Gastrocnemius medialis (tissue), 4 donors: ENCODE measurements at regions of chr9 and their contacts with region 1.

Region 1: GRCh38 chr9:98255578-98256296 is at the start of gene TBC1D2:
- DNase-seq: peak; percentile 91 to 93
- ATAC-seq: peak; percentile 95
- H3K4me3 ChIP-seq: peak within 1 kb of the TSS; percentile 76 to 100 (median 78)
- H3K27ac ChIP-seq: peak within 1 kb of the TSS; percentile 90 to 100 (median 93)
- H3K4me1 ChIP-seq: peaks cover 11 to 20% of the 10 kb centered on the region in 2 donors
- H3K27me3 ChIP-seq: no peaks in the 10 kb centered on the region
- CTCF ChIP-seq: peak in 2 of 5 experiments; percentile 25 to 30
- POLR2A ChIP-seq: peak; percentile 41 to 45
- total RNA-seq, gene TBC1D2: 0.66 to 2.9 (median 1.6) TPM

Region 2: DNA sequence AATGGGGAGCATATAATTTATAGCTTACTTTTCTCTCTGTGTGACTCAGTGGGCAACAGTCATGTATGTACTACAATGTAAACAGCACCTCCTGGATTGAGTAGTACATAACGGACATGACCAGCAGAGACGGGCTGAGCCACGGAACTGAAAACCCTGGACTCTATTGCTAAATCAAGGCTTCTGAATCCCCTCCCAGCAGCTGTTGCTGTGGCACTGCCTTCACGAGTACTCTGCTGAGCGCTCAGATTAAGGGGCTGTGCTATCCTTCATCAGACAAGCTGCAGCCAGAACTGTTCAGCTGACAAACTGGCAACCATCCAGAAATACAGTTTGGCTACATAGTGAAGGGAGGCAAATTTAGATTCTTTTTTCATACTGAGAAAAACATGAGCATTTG is 1079.5 kb before region 1 on chr9:
- in situ Hi-C with region 1: no loop called
- intact Hi-C with region 1: no loop called
- DNase-seq: no peak
- ATAC-seq: no peak
- H3K4me3 ChIP-seq: no peak overlapping the region
- H3K27ac ChIP-seq: no peak overlapping the region
- H3K4me1 ChIP-seq: no peaks in the 10 kb centered on the region
- H3K27me3 ChIP-seq: no peaks in the 10 kb centered on the region
- CTCF ChIP-seq: no peak
- POLR2A ChIP-seq: no peak

Region 3: GRCh38 chr9:97632985-97633858 is 622.5 kb before region 1 on chr9 and contains the starts of genes NCBP1 and TSTD2:
- in situ Hi-C with region 1: no loop called
- intact Hi-C with region 1: loop called (anchors 5 kb)
- DNase-seq: peak; percentile 96 to 98
- ATAC-seq: peak; percentile 87 to 88
- H3K4me3 ChIP-seq: peak within 1 kb of the TSS; percentile 86 to 92 (median 88)
- H3K27ac ChIP-seq: peak within 1 kb of the TSS; percentile 91 to 99 (median 98)
- H3K4me1 ChIP-seq: peaks cover 53 to 56% of the 10 kb centered on the region in 2 donors
- H3K27me3 ChIP-seq: no peaks in the 10 kb centered on the region
- CTCF ChIP-seq: peak in 1 of 5 experiments; percentile 8
- POLR2A ChIP-seq: peak; percentile 83 to 87
- total RNA-seq, gene NCBP1: 8.2 to 17.2 (median 15.7) TPM
- total RNA-seq, gene TSTD2: 11.6 to 19.9 (median 14.5) TPM

Region 4: GRCh38 chr9:97703437-97704344 is 552.0 kb before region 1 on chr9:
- in situ Hi-C with region 1: loop called (anchors 10 to 25 kb)
- intact Hi-C with region 1: loop called (anchors 5 kb)
- DNase-seq: no peak
- ATAC-seq: no peak
- H3K4me3 ChIP-seq: no peak overlapping the region
- H3K27ac ChIP-seq: no peak overlapping the region
- H3K4me1 ChIP-seq: no peaks in the 10 kb centered on the region
- H3K27me3 ChIP-seq: no peaks in the 10 kb centered on the region
- CTCF ChIP-seq: no peak
- POLR2A ChIP-seq: no peak

Region 5: DNA sequence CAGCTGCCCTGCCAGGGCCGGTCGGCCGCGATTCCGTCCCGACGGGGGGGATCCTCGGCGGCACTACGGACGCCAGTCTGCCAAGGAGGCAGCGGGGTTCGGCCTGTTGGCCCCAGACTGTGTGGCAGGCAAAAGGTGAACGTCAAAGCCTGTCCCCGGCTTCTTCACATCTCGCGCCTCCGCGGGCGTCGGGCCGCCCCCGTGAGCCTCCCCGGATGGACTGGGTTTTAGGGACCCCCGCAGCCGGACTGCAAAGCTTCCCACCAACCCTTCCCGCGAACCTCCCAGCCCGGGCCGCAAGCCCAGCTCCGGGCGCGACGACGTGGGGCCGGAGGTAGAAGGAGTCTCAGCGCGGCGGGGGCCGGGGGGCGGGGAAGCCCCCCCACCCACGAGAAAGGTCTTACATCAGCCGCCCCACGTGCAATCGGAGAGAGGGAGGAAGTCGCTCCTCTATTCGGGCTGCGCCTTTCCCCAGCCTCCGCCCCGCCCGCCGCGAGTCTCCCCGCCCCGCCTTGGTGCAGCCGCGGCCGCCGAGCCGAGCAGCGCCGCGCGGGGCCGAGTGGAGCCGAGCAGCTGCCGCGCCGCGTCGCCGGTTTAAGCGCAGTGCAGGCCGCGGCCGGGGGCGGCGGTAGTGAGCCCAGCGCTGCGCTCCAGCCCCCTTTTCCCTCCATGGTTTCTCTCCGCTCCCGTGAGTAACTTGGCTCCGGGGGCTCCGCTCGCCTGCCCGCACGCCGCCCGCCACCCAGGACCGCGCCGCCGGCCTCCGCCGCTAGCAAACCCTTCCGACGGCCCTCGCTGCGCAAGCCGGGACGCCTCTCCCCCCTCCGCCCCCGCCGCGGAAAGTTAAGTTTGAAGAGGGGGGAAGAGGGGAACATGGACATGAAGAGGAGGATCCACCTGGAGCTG is 272.8 kb before region 1 on chr9 and contains the start of gene ANP32B:
- in situ Hi-C with region 1: no loop called
- intact Hi-C with region 1: loop called (anchors 5 kb)
- DNase-seq: peak; percentile 73 to 85
- ATAC-seq: peak; percentile 55 to 59
- H3K4me3 ChIP-seq: peak within 1 kb of the TSS; percentile 84 to 99 (median 89)
- H3K27ac ChIP-seq: peak within 1 kb of the TSS; percentile 93 to 99 (median 96)
- H3K4me1 ChIP-seq: peaks cover 48 to 55% of the 10 kb centered on the region in 2 donors
- H3K27me3 ChIP-seq: no peaks in the 10 kb centered on the region
- CTCF ChIP-seq: peak; percentile 73 to 99 (median 97)
- POLR2A ChIP-seq: peak; percentile 58 to 63
- total RNA-seq, gene ANP32B: 8.2 to 24.5 (median 17.8) TPM

Region 6: DNA sequence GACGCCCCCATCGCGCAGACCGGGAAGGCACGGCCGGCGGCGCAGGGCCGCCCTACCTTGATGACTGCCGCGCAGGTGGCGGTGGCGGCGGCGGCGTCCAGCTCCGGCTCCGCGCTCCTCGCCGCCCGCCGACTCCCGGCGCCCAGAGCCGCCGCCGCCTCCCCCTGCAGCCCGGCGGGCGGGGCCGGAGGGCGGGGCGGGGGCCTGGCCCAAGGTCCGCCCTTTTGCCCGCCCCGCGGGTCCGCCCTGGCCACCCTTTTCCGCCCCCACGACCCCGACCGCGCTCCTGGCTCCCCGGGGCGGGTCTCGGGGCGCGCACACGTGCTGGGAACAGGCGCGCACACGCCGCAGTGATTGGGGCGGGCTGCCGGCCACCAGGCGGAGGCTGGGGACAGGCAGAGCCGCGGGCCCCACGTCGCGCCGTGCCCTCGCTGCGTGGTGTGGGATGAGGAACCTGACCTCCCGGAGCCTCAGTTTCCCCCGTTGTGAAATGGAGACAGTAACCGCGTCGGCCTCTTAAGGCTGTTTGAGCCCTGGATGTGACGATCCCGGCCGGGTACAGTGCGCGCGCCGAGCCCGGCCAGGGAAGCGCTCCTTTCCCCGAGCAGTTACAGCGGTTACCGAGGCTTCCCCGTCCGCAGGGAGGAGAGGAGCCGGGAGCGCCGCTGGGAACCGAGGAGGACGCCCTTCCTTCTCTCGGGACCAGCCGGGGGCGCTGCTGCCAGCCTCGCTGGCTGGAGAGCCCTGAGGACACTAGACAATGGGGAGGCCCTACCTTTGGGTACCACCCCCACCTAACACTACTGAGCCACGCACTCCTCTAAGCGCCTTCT is 63.0 kb before region 1 on chr9 and contains the start of gene CORO2A:
- in situ Hi-C with region 1: no loop called
- intact Hi-C with region 1: loop called (anchors 5 kb)
- DNase-seq: no peak
- ATAC-seq: peak; percentile 66 to 77
- H3K4me3 ChIP-seq: peak within 1 kb of the TSS; percentile 63 to 73 (median 67)
- H3K27ac ChIP-seq: peak within 1 kb of the TSS; percentile 27 to 58 (median 41)
- H3K4me1 ChIP-seq: peaks cover 0 to 7% of the 10 kb centered on the region in 2 donors
- H3K27me3 ChIP-seq: no peaks in the 10 kb centered on the region
- CTCF ChIP-seq: peak in 2 of 5 experiments; percentile 7 to 22
- POLR2A ChIP-seq: peak; percentile 9 to 42
- total RNA-seq, gene CORO2A: 0.05 to 0.42 (median 0.19) TPM